Activated CD4-positive, alpha-beta memory T cell treated with anti-CD3 and anti-CD28 coated beads for 36 hours (primary cell): ENCODE measurements at regions of chr9 and their contacts with region 1.

Region 1: GRCh38 chr9:10633785-10634184 is 21.0 kb upstream of the PTPRD start:
- DNase-seq: no peak
- H3K4me3 Mint-ChIP-seq: no peak overlapping the region
- H3K27ac Mint-ChIP-seq: no peak overlapping the region
- H3K4me1 Mint-ChIP-seq: no peaks in the 10 kb centered on the region
- H3K27me3 Mint-ChIP-seq: no peaks in the 10 kb centered on the region

Region 2: GRCh38 chr9:10548348-10548747 is 85.4 kb before region 1 on chr9:
- CTCF ChIA-PET with region 1: no interaction called
- POLR2A ChIA-PET with region 1: no interaction called
- intact Hi-C with region 1: loop called (anchors 10 kb)
- DNase-seq: no peak
- H3K4me3 Mint-ChIP-seq: no peak overlapping the region
- H3K27ac Mint-ChIP-seq: no peak overlapping the region
- H3K4me1 Mint-ChIP-seq: no peaks in the 10 kb centered on the region
- H3K27me3 Mint-ChIP-seq: no peaks in the 10 kb centered on the region